ENCODE measurements at regions of chr10 and their contacts with region 1.

Region 1: GRCh38 chr10:78205457-78206016 is 171.9 kb downstream of the RPS24 start:
- DNase-seq: no peak
- ATAC-seq: no peak
- H3K4me3 ChIP-seq: no peak overlapping the region
- H3K27ac ChIP-seq: no peak overlapping the region; the same call in 1 of the 2 replicates
- H3K4me1 ChIP-seq: peaks cover 14% of the 10 kb centered on the region
- H3K27me3 ChIP-seq: no peaks in the 10 kb centered on the region
- CTCF ChIP-seq: no peak
- EP300 ChIP-seq: no peak
- POLR2A ChIP-seq: no peak
- RAD21 ChIP-seq: no peak

Region 2: DNA sequence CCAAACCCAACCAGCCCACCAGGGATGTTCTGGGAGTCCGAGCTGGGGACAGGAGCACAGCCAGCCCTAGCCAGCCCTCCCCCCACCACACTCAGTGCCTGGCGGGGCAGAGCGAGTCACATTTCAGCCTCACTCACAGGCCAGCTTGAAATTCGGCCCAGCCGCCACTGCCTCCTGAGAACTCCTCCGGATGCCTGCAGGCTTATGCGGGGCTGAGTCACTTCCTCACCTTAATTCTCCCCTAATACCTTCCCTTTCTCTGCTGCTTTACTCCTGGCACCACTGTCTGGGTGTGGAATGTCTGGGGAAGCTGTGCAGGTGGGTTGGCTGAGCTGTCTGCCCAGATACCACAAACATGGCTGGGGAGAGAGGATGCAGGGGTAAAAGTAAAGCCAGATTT is 256.4 kb before region 1 on chr10:
- CTCF ChIA-PET with region 1: no interaction called
- POLR2A ChIA-PET with region 1: no interaction called
- RAD21 ChIA-PET with region 1: no interaction called
- SMC1A ChIA-PET with region 1: no interaction called
- in situ Hi-C with region 1: no loop called
- intact Hi-C with region 1: loop called (anchors 5 kb)
- DNase-seq: no peak
- ATAC-seq: no peak
- H3K4me3 ChIP-seq: no peak overlapping the region
- H3K27ac ChIP-seq: no peak overlapping the region
- H3K4me1 ChIP-seq: no peaks in the 10 kb centered on the region
- H3K27me3 ChIP-seq: no peaks in the 10 kb centered on the region
- CTCF ChIP-seq: no peak
- EP300 ChIP-seq: no peak
- POLR2A ChIP-seq: no peak
- RAD21 ChIP-seq: no peak

Region 3: DNA sequence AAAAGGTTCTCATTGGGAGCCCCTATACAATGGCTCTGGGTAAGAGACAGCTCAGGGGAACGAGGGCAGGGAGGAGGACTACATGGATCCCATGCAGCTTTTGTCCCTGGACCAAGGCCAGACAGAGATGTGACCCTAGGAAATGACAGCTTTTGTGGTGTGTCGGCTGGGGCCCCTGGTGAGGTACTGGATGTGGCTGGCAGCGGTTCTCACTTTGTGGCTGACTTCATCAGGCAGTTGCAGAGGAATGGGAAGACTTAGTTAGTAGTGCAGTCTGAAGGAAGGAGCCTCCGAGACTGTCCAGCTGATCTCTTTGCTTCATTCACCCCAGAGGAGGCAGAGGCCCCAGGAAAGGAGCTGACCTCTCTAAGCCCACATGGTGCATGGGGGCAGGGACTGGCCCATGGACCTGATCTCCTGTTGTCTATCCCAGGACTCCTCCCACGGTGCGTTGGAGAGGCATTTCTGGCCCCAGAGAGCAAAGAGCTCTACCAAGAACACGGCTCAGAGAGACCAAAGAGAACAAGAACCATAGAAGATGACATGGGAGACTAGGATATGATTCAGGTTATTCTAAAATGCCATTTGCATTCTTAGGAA is 31.0 kb after region 1 on chr10:
- CTCF ChIA-PET with region 1: no interaction called
- POLR2A ChIA-PET with region 1: no interaction called
- RAD21 ChIA-PET with region 1: no interaction called
- SMC1A ChIA-PET with region 1: no interaction called
- in situ Hi-C with region 1: no loop called
- intact Hi-C with region 1: no loop called
- DNase-seq: no peak
- ATAC-seq: no peak
- H3K4me3 ChIP-seq: no peak overlapping the region
- H3K27ac ChIP-seq: no peak overlapping the region
- H3K4me1 ChIP-seq: no peaks in the 10 kb centered on the region
- H3K27me3 ChIP-seq: no peaks in the 10 kb centered on the region; a peak in 1 of 4 replicates
- CTCF ChIP-seq: no peak
- EP300 ChIP-seq: no peak
- POLR2A ChIP-seq: no peak
- RAD21 ChIP-seq: no peak

Measured in GM12878 (cell line).